ENCODE measurements at regions of chr14 and their contacts with region 1.

Region 1: GRCh38 chr14:75906676-75907280 is 75.0 kb downstream of the TGFB3 start:
- DNase-seq: peak; percentile 70
- H3K4me3 Mint-ChIP-seq: no peak overlapping the region
- H3K27ac Mint-ChIP-seq: no peak overlapping the region
- H3K4me1 Mint-ChIP-seq: no peaks in the 10 kb centered on the region
- H3K27me3 Mint-ChIP-seq: no peaks in the 10 kb centered on the region

Region 2: GRCh38 chr14:75514673-75515628 is 391.8 kb before region 1 on chr14:
- CTCF ChIA-PET with region 1: no interaction called
- POLR2A ChIA-PET with region 1: no interaction called
- intact Hi-C with region 1: no loop called
- DNase-seq: peak; percentile 77
- H3K4me3 Mint-ChIP-seq: peak overlapping the region; percentile 80
- H3K27ac Mint-ChIP-seq: peak overlapping the region; percentile 95
- H3K4me1 Mint-ChIP-seq: peaks cover 69% of the 10 kb centered on the region
- H3K27me3 Mint-ChIP-seq: no peaks in the 10 kb centered on the region

Region 3: GRCh38 chr14:75863221-75863620 is 43.6 kb before region 1 on chr14:
- CTCF ChIA-PET with region 1: interaction called, 10 read pairs
- POLR2A ChIA-PET with region 1: no interaction called
- intact Hi-C with region 1: no loop called
- DNase-seq: no peak
- H3K4me3 Mint-ChIP-seq: no peak overlapping the region
- H3K27ac Mint-ChIP-seq: no peak overlapping the region
- H3K4me1 Mint-ChIP-seq: no peaks in the 10 kb centered on the region
- H3K27me3 Mint-ChIP-seq: no peaks in the 10 kb centered on the region

Region 4: GRCh38 chr14:75982266-75983018 is 75.7 kb after region 1 on chr14:
- CTCF ChIA-PET with region 1: interaction called, 136 read pairs
- POLR2A ChIA-PET with region 1: no interaction called
- intact Hi-C with region 1: loop called (anchors 1 kb)
- DNase-seq: peak; percentile 84
- H3K4me3 Mint-ChIP-seq: peak overlapping the region; percentile 72
- H3K27ac Mint-ChIP-seq: no peak overlapping the region
- H3K4me1 Mint-ChIP-seq: peaks cover 47% of the 10 kb centered on the region
- H3K27me3 Mint-ChIP-seq: peaks cover 2% of the 10 kb centered on the region

Region 5: DNA sequence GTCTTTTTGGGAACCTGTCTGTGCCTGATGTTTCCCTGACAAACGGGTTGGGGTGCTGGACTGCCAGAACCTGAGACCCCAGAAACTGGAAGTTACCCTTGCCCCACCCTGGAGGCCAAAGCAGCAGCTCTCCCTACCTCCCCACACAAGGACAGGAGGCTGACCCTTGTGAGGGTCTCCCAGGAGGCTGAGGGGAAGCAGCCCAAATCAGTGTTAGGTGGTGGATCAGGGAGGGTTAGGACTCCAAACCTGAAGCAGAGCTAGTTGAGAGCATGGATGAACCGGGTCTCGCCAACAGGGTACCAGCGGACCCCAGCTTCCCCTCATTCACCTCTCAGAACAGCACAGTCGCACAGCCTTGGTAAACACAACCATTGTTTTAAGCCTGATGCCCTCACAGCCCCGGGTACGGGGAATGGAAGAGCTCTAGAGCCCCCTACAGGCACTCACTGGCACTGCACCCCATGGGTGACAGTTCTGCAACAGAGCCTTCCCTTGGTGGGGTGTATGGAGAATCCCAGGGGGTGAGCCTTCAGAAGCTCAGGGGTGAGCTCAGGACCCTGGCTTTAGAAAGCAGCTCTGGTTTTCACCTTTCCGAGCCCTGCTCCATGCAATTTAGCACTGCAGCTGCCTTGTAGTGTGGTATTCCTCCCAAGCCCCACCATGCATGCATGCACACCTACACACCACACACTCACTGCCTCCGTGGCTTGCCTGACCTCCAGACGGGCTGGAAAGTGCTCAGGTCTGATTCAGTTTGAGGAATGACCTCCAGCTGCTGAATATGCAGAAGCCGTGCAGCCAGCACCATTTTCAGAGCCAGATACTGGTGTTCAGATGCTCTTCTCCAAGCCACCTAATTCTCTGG is 480.4 kb after region 1 on chr14:
- CTCF ChIA-PET with region 1: interaction called, 15 read pairs
- POLR2A ChIA-PET with region 1: no interaction called
- intact Hi-C with region 1: loop called (anchors 2 kb)
- DNase-seq: peak; percentile 76
- H3K4me3 Mint-ChIP-seq: no peak overlapping the region
- H3K27ac Mint-ChIP-seq: no peak overlapping the region
- H3K4me1 Mint-ChIP-seq: no peaks in the 10 kb centered on the region
- H3K27me3 Mint-ChIP-seq: peaks cover 37% of the 10 kb centered on the region